ENCODE measurements at regions of chr2 and their contacts with region 1.

Region 1: GRCh38 chr2:169397697-169398096 is 35.4 kb upstream of the LRP2 start:
- DNase-seq: no peak
- H3K4me3 Mint-ChIP-seq: no peak overlapping the region
- H3K27ac Mint-ChIP-seq: no peak overlapping the region
- H3K4me1 Mint-ChIP-seq: no peaks in the 10 kb centered on the region
- H3K27me3 Mint-ChIP-seq: peaks cover 17% of the 10 kb centered on the region

Region 2: DNA sequence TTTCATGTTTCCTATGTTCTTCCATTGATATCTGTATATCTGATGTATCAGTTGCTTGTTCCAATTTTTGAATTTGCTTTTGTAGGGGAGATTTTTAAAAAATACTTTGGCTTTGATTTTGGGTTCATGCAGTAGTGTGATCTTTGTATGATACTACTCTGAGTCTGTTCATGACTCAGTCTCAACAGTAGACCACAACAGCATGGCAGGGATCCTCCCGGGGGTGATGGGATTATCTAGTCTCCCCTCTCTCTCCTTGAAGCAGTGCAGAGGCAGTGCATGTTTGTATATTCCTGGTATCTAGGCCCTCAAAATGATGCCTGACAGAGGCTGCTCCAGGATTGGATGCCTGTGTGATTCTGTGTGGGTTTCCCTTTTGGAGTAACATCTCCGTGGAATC is 441.3 kb before region 1 on chr2:
- CTCF ChIA-PET with region 1: no interaction called
- intact Hi-C with region 1: loop called (anchors 5 kb)
- DNase-seq: peak; percentile 6
- H3K4me3 Mint-ChIP-seq: no peak overlapping the region
- H3K27ac Mint-ChIP-seq: no peak overlapping the region
- H3K4me1 Mint-ChIP-seq: no peaks in the 10 kb centered on the region
- H3K27me3 Mint-ChIP-seq: peaks cover 9% of the 10 kb centered on the region